Stomach (tissue), 19 donors: ENCODE measurements at regions of chr11 and their contacts with region 1.

Region 1: DNA sequence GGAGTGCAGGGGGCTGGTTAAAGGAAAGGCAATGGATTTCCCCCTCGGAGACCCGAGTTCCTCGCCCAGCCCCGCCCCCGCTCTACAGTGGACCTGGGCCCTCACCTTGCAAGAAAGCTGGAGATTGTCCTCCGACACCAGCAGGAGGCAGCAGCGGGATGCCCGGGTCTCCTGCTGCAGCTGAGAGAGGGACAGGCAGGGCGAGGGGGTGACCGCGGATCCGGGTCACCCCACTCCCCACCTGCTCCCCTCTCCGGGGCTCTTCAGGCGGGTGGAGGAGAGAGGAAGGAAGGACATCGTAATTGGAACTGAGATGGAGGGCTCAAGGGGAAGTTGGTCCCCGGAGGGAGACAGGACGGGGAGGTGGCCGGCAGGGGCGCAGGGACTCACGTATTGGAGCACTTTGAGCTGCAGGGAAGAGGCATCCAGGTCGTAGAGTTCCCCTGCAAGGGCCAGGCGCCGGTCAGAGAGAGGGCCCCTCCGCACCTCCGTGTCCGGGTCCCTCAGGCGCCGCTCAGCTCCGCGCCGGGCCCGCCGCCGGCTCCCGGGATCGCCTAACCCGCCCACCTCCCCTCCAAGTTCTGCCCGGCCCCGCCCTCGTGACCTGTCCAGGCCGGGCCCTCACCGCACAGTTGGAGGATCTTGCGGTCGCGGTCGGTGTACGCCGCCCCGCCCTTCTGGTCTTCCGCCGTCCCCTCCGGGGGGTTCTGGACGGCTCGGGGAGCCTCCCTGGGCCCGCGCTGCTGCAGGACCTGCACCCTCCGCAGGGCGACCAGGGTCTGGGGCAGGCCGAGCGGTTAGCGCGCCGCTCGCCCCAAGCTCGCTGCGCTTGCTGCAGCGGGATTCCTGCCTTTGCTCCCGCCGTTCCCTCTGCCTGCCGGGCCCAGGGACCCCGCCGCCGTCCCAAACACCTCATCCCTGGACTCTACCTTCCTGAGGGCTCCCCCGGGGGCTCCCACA is 84.1 kb downstream of the PDE2A start:
- DNase-seq: peak; percentile 47 to 74
- H3K4me3 ChIP-seq: peak overlapping the region in 3 of 4 donors; percentile 26 to 49 (median 27)
- H3K27ac ChIP-seq: no peak overlapping the region
- H3K4me1 ChIP-seq: peaks cover 8 to 23% (median 16%) of the 10 kb centered on the region in 4 donors
- H3K27me3 ChIP-seq: peaks cover 0 to 91% (median 40%) of the 10 kb centered on the region in 3 donors
- CTCF ChIP-seq: peak in 5 of 7 experiments; percentile 11 to 38 (median 20)
- EP300 ChIP-seq: no peak
- POLR2A ChIP-seq: no peak

Region 2: DNA sequence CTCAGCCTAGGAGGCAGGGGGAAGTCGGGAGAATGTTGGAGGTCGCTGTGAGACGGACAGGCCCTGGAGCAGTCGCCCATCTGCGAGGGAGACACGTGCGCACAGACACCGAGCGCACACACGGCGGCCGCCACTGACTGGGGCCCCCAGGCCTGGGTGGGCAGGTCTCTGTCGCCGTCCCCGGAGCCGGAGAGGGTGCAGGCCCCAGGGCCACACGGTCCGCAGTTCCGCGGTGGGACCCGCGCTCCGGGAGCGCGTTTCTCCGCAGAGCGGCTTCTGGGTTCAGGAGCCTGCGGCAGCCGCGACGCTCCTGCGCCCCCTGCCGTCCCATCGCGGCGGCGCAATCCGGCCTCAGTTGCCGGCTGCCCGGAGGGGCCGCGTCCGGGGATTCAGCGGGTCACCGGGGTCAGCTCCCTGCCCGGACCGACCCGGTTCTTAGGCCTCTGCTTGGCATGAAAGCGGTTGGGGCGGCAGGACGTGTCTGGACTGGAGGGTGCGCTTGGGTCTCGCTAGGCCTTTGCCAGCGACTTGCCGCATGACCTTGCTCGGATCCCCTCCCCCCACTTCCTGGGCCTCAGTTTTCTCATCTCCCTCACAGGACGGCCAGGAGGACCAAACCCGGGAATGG is 52.9 kb after region 1 on chr11:
- intact Hi-C with region 1: loop called (anchors 2 kb)
- DNase-seq: peak; percentile 56 to 88
- H3K4me3 ChIP-seq: peak overlapping the region; percentile 57 to 70 (median 64)
- H3K27ac ChIP-seq: peak overlapping the region in 4 of 5 donors; percentile 29 to 68 (median 62)
- H3K4me1 ChIP-seq: peaks cover 17 to 41% (median 29%) of the 10 kb centered on the region in 4 donors
- H3K27me3 ChIP-seq: peaks cover 0 to 48% (median 32%) of the 10 kb centered on the region in 3 donors
- CTCF ChIP-seq: peak in 5 of 7 experiments; percentile 85 to 97 (median 93)
- EP300 ChIP-seq: no peak
- POLR2A ChIP-seq: no peak

Region 3: DNA sequence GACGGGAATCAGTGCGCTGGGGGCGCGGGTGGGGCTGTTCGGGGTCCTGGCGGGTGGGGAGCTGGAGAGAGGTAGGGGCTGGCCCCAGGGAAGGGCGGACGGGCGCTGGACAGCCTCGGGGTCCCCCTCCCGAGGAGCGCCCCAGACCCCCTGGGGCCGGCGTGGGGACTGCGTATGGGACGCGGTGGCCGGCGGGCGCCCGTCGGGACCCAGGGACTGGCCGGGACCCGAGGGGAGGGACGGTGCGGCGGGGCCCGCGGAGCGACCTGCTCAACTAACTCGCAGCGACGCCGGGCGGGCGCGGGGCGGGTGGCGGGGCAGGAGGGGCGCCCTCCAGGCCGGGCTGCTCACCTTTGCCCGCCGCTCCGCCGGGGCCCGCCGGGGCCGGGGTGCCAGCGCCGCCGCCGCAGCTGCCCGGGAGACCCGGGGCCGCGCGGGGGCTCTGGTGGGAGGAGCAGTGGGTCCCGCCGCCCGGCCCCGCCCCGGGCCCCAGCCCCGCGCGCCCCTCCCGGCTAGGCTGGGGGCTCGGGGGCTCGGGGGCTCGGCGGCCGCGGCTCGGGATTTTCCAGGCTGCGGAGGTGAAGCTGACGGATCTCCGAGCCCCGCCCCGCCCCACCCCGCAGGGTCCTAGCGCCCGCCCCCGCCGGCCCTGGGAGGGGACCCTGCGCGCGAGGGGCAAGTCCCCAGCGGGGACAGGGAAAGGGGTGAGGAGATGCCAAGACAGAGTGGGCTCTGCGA is 191.4 kb after region 1 on chr11:
- intact Hi-C with region 1: no loop called
- DNase-seq: peak; percentile 65 to 88
- H3K4me3 ChIP-seq: peak overlapping the region; percentile 73 to 82 (median 76)
- H3K27ac ChIP-seq: peak overlapping the region; percentile 93 to 96 (median 95)
- H3K4me1 ChIP-seq: peaks cover 50 to 88% (median 81%) of the 10 kb centered on the region in 4 donors
- H3K27me3 ChIP-seq: no peaks in the 10 kb centered on the region
- CTCF ChIP-seq: no peak
- EP300 ChIP-seq: no peak
- POLR2A ChIP-seq: no peak